ENCODE measurements at regions of chr19 and their contacts with region 1.

Region 1: DNA sequence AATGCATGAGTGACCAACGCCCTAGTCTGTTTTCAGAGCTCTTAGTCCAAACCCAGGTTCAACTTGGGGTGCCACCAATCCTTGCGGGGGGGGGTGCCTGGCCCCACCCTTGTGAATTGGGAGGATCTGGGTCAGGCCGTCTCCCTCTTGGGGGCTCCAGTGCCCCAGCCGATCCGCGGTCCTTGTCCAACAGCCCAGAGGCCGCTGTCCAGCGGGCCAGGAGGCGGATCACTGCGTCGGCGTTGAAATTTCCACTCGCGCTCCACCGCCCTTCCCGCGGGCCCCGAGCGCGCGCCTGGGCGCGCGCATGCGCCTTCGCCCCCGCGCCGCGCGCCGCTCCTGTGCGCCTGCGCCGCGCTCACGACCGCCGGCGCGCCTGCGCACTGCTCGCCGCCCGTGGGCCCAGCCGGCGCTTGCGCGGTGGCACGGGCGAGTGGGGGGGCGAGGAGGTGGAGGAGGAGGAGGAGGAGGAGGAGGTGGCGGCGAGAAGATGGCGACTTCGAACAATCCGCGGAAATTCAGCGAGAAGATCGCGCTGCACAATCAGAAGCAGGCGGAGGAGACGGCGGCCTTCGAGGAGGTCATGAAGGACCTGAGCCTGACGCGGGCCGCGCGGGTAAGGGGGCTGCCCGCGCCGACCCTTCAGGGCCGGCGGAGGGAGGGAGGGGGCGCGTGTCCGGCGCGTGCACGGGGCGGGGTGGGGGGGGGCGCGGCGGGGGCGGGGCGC is at the start of gene CRTC1:
- DNase-seq: peak; percentile 91 to 98 (median 96)
- ATAC-seq: peak; percentile 94
- H3K4me3 ChIP-seq: peak within 1 kb of the TSS; percentile 92
- H3K4me3 Mint-ChIP-seq: peak within 1 kb of the TSS; percentile 80 to 93 (median 87)
- H3K27ac ChIP-seq: peak within 1 kb of the TSS; percentile 78
- H3K27ac Mint-ChIP-seq: peak within 1 kb of the TSS; percentile 31 to 94 (median 90)
- H3K4me1 ChIP-seq: peaks cover 12 to 16% of the 10 kb centered on the region in 2 donors
- H3K4me1 Mint-ChIP-seq: peaks cover 6 to 45% (median 27%) of the 10 kb centered on the region in 7 donors
- H3K27me3 ChIP-seq: no peaks in the 10 kb centered on the region
- H3K27me3 Mint-ChIP-seq: peaks cover 0 to 3% (median 0%) of the 10 kb centered on the region in 5 donors
- total RNA-seq, gene CRTC1: 8.4 to 23.4 (median 22.3) TPM

Region 2: DNA sequence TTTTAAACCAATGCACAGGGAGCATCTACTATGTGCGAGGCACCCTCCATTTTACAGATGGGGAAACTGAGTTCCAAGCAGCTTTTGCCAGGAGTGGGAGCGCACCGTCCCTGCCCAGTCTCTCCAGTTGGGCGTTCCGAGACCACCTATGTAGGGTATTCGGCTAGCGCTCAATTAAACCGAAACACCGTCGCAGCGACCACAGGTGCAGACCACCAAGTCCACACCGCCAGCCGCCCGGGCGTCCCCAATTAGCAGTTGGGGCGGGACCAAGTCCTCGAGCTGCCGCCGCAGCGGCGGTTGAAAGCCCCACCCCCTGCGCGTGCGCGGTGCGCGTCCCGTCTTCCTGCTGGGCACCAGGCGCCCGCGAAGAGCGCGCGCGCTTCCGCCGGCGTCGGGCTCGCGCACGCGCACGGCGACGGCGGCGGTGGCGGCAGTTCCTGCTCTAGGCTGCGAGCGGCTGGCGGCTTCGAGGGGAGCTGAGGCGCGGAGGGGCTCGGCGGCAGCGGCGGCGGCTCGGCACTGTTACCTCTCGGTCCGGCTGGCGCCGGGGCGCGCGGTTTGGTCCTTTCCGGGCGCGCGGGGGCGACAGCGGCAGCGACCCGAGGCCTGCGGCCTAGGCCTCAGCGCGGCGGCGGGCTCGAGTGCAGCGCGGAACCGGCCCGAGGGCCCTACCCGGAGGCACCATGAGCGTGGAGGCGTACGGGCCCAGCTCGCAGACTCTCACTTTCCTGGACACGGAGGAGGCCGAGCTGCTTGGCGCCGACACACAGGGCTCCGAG is 148.3 kb after region 1 on chr19 and contains the start of gene UPF1:
- CTCF ChIA-PET with region 1: no interaction called
- POLR2A ChIA-PET with region 1: interaction called, 9 read pairs
- intact Hi-C with region 1: loop called (anchors 1 kb)
- DNase-seq: peak; percentile 92 to 99 (median 96)
- ATAC-seq: peak; percentile 93
- H3K4me3 ChIP-seq: peak within 1 kb of the TSS; percentile 95
- H3K4me3 Mint-ChIP-seq: peak within 1 kb of the TSS; percentile 89 to 97 (median 92)
- H3K27ac ChIP-seq: peak within 1 kb of the TSS; percentile 90
- H3K27ac Mint-ChIP-seq: peak within 1 kb of the TSS; percentile 83 to 96 (median 90)
- H3K4me1 ChIP-seq: peaks cover 17 to 23% of the 10 kb centered on the region in 2 donors
- H3K4me1 Mint-ChIP-seq: peaks cover 36 to 42% (median 39%) of the 10 kb centered on the region in 7 donors
- H3K27me3 ChIP-seq: no peaks in the 10 kb centered on the region
- H3K27me3 Mint-ChIP-seq: peaks cover 0 to 18% (median 6%) of the 10 kb centered on the region in 5 donors
- total RNA-seq, gene UPF1: 98.7 to 148 (median 113) TPM